CD4-positive, alpha-beta memory T cell (primary cell): ENCODE measurements at regions of chr1 and their contacts with region 1.

Region 1: DNA sequence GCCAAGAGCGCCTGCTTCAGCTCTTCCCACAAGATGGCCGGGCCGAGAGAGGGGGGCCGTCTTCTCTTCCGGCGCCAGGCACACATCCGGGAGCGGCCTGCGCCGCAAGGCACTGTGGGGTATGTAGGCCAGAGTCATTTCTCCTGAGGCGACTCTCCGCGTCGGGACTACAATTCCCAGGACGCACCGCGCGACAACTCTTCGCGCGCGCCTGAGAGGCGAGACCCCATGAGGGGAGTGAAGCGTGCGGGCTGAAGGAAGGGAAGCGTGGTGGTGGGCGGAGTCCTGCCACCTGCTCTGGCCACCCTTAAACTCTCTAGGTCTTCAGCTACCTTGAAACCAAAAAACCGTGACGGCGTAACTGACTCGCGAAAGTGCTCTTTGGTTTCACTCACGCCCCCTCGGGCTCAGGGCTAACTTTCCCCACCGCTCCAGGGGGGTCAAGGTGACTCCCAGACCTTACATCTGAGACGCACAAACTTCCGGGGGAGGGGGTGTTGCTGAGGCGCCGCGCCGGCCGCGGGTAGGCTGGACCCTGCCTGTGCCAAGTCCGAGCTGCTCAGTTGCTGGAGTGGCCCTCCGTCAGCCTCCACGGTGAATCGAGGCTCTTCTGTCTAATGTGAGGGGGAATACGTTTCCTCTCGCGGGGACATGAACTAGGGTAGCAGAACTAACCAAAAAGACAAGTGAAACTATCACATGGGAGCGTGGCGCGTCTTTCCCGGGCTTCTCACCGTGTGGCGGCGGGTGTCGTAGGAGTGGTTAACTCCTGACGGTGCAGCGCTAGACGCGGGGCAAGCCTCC is at the start of gene SERBP1:
- DNase-seq: peak; percentile 94 to 97 (median 96)
- H3K4me3 ChIP-seq: peak within 1 kb of the TSS; percentile 87 to 91
- H3K4me3 Mint-ChIP-seq: peak within 1 kb of the TSS; percentile 92 to 99 (median 95)
- H3K27ac ChIP-seq: peak within 1 kb of the TSS; percentile 88
- H3K27ac Mint-ChIP-seq: peak within 1 kb of the TSS; percentile 96 to 99 (median 98)
- H3K4me1 ChIP-seq: peaks cover 36% of the 10 kb centered on the region
- H3K4me1 Mint-ChIP-seq: peaks cover 29 to 57% (median 34%) of the 10 kb centered on the region in 4 donors
- H3K27me3 ChIP-seq: no peaks in the 10 kb centered on the region
- H3K27me3 Mint-ChIP-seq: no peaks in the 10 kb centered on the region
- total RNA-seq, gene SERBP1: 148 to 154 TPM

Region 2: GRCh38 chr1:66924756-66925557 is 505.6 kb before region 1 on chr1 and contains the starts of genes DNAI4 and MIER1:
- CTCF ChIA-PET with region 1: interaction called, 3 read pairs
- POLR2A ChIA-PET with region 1: interaction called, 23 read pairs
- intact Hi-C with region 1: loop called (anchors 1 kb)
- DNase-seq: peak; percentile 98 to 99 (median 98)
- H3K4me3 ChIP-seq: peak within 1 kb of the TSS; percentile 95 to 98
- H3K4me3 Mint-ChIP-seq: peak within 1 kb of the TSS; percentile 92 to 99 (median 96)
- H3K27ac ChIP-seq: peak within 1 kb of the TSS; percentile 95
- H3K27ac Mint-ChIP-seq: peak within 1 kb of the TSS; percentile 97 to 99 (median 98)
- H3K4me1 ChIP-seq: peaks cover 47% of the 10 kb centered on the region
- H3K4me1 Mint-ChIP-seq: peaks cover 26 to 63% (median 34%) of the 10 kb centered on the region in 4 donors
- H3K27me3 ChIP-seq: no peaks in the 10 kb centered on the region
- H3K27me3 Mint-ChIP-seq: peaks cover 0 to 1% of the 10 kb centered on the region in 2 donors
- total RNA-seq, gene DNAI4: 7.9 to 11.4 TPM
- total RNA-seq, gene MIER1: 77.0 to 81.3 TPM

Region 3: GRCh38 chr1:66968574-66968973 is 462.0 kb before region 1 on chr1:
- CTCF ChIA-PET with region 1: no interaction called
- POLR2A ChIA-PET with region 1: no interaction called
- intact Hi-C with region 1: no loop called
- DNase-seq: no peak
- H3K4me3 ChIP-seq: no peak overlapping the region
- H3K4me3 Mint-ChIP-seq: no peak overlapping the region
- H3K27ac ChIP-seq: no peak overlapping the region
- H3K27ac Mint-ChIP-seq: peak overlapping the region in 4 of 7 donors; percentile 11 to 71 (median 42)
- H3K4me1 ChIP-seq: no peaks in the 10 kb centered on the region
- H3K4me1 Mint-ChIP-seq: peaks cover 19 to 36% (median 27%) of the 10 kb centered on the region in 4 donors
- H3K27me3 ChIP-seq: no peaks in the 10 kb centered on the region
- H3K27me3 Mint-ChIP-seq: no peaks in the 10 kb centered on the region

Region 4: DNA sequence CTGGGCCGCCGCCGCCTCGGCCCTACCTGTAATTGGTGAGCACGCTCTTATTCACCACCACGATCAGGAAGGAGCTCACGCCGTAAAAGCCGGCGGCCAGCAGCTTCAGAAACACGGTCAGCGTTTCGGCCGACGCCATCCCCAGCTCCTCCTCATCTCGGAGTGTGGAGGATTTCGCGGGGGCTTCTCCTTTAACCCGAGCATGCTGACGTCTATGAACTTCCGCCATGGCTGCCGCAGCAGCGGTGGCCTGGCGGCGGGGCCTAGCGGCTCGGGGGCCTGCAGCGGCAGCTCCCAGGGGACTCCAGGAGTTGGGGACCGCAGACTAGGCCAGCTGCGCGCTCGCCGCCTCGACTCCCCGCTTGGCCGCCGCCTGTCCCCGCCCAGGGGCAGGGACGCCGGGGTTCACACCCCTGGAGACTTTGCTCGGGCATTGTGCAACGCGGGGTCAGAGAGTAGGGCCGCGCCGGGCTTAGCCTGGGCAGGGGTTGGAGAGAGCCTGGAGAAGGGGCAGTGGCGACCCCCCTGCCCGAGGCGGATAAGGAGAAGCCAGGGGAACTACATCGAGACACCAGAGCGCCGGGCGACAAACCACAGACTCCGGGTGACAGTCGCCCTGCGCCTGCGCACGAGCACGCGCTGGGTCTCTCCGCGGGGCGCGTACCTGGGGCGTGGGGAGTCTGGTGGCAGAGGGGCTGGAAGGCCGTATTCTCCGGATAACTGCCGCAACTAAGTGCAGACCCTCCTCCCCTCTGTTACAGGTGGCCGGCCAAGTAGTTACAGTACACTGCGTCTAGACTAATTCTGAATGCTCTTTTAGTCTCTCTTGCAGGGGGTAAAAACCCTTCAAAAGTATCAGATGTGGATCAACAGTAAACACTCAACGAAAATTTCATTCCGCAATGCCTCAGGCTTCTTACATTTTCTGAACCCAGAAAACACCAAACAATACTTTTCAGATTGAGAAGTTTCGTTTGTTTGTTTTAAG is 376.5 kb before region 1 on chr1 and contains the start of gene SLC35D1:
- CTCF ChIA-PET with region 1: no interaction called
- POLR2A ChIA-PET with region 1: interaction called, 16 read pairs
- intact Hi-C with region 1: loop called (anchors 1 kb)
- DNase-seq: peak; percentile 68 to 82 (median 77)
- H3K4me3 ChIP-seq: peak within 1 kb of the TSS; percentile 73 to 88
- H3K4me3 Mint-ChIP-seq: peak within 1 kb of the TSS; percentile 93 to 96 (median 95)
- H3K27ac ChIP-seq: peak within 1 kb of the TSS; percentile 91
- H3K27ac Mint-ChIP-seq: peak within 1 kb of the TSS; percentile 66 to 98 (median 97)
- H3K4me1 ChIP-seq: peaks cover 25% of the 10 kb centered on the region
- H3K4me1 Mint-ChIP-seq: peaks cover 21 to 38% (median 28%) of the 10 kb centered on the region in 4 donors
- H3K27me3 ChIP-seq: no peaks in the 10 kb centered on the region
- H3K27me3 Mint-ChIP-seq: no peaks in the 10 kb centered on the region
- total RNA-seq, gene SLC35D1: 16.9 to 17.7 TPM

Region 5: GRCh38 chr1:67230539-67230938 is 200.0 kb before region 1 on chr1:
- CTCF ChIA-PET with region 1: no interaction called
- POLR2A ChIA-PET with region 1: no interaction called
- intact Hi-C with region 1: loop called (anchors 5 kb)
- DNase-seq: no peak
- H3K4me3 ChIP-seq: no peak overlapping the region
- H3K4me3 Mint-ChIP-seq: no peak overlapping the region
- H3K27ac ChIP-seq: no peak overlapping the region
- H3K27ac Mint-ChIP-seq: no peak overlapping the region
- H3K4me1 ChIP-seq: no peaks in the 10 kb centered on the region
- H3K4me1 Mint-ChIP-seq: peaks cover 0 to 4% (median 2%) of the 10 kb centered on the region in 4 donors
- H3K27me3 ChIP-seq: no peaks in the 10 kb centered on the region
- H3K27me3 Mint-ChIP-seq: no peaks in the 10 kb centered on the region

Region 6: GRCh38 chr1:67685067-67685557 is 254.6 kb after region 1 on chr1 and contains the start of gene GADD45A:
- CTCF ChIA-PET with region 1: no interaction called
- POLR2A ChIA-PET with region 1: interaction called, 27 read pairs
- intact Hi-C with region 1: loop called (anchors 1 kb)
- DNase-seq: peak; percentile 93 to 98 (median 95)
- H3K4me3 ChIP-seq: peak within 1 kb of the TSS; percentile 69 to 81
- H3K4me3 Mint-ChIP-seq: peak within 1 kb of the TSS; percentile 96 to 99 (median 98)
- H3K27ac ChIP-seq: peak within 1 kb of the TSS; percentile 60
- H3K27ac Mint-ChIP-seq: peak within 1 kb of the TSS; percentile 88 to 97 (median 96)
- H3K4me1 ChIP-seq: peaks cover 19% of the 10 kb centered on the region
- H3K4me1 Mint-ChIP-seq: peaks cover 11 to 24% (median 18%) of the 10 kb centered on the region in 4 donors
- H3K27me3 ChIP-seq: no peaks in the 10 kb centered on the region
- H3K27me3 Mint-ChIP-seq: no peaks in the 10 kb centered on the region
- total RNA-seq, gene GADD45A: 25.3 to 26.8 TPM